ENCODE measurements at regions of chr2 and their contacts with region 1.

Region 1: DNA sequence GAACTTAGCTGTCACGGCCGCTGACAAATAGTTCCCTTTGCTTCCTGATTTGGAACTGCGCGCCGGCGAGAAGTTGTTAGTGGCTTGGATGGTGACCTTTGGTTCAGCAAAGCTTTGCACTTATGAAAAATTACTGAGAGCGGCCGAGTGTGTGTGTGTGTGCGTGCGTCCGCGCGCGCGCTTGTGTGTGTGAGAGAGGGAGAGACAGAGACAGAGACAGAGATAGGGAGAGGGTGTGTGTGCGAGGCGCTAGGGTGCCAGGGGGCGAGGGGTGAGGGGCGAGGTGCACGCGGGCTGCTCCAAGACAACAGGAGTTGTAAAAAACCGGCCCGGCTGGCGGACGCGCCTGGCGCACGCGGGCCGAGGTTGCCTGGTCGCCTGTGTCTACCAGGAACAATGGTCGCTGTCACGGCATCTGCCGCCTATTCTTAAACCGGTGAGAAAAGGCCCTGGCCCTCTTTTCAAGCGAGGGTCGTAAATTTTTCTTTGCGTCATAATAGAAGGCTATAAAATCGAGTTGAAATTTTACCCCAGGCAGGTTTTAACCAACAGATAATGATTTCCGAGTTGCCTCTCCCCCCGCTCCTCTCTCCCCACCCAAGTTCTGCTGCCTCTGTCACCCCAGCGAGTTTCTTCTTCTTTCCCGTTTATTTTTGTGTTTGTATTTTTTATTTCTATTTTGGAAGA is 535 bp downstream of the HOXD3 start:
- DNase-seq: no peak

Region 2: GRCh38 chr2:176171351-176172006 is 13.8 kb after region 1 on chr2:
- intact Hi-C with region 1: loop called (anchors 2 kb)
- DNase-seq: no peak

Measured in cardiac septum (tissue), 1 donor.